CD4-positive, alpha-beta T cell (primary cell): ENCODE measurements at regions of chr16 and their contacts with region 1.

Region 1: GRCh38 chr16:67641779-67642708 is 2.9 kb upstream of the CARMIL2 start:
- DNase-seq: no peak
- ATAC-seq: no peak
- H3K4me3 ChIP-seq: no peak overlapping the region
- H3K4me3 Mint-ChIP-seq: no peak overlapping the region
- H3K27ac ChIP-seq: no peak overlapping the region
- H3K27ac Mint-ChIP-seq: no peak overlapping the region
- H3K4me1 ChIP-seq: peaks cover 31% of the 10 kb centered on the region
- H3K4me1 Mint-ChIP-seq: no peaks in the 10 kb centered on the region
- H3K27me3 ChIP-seq: no peaks in the 10 kb centered on the region
- H3K27me3 Mint-ChIP-seq: no peaks in the 10 kb centered on the region
- CTCF ChIP-seq: no peak

Region 2: DNA sequence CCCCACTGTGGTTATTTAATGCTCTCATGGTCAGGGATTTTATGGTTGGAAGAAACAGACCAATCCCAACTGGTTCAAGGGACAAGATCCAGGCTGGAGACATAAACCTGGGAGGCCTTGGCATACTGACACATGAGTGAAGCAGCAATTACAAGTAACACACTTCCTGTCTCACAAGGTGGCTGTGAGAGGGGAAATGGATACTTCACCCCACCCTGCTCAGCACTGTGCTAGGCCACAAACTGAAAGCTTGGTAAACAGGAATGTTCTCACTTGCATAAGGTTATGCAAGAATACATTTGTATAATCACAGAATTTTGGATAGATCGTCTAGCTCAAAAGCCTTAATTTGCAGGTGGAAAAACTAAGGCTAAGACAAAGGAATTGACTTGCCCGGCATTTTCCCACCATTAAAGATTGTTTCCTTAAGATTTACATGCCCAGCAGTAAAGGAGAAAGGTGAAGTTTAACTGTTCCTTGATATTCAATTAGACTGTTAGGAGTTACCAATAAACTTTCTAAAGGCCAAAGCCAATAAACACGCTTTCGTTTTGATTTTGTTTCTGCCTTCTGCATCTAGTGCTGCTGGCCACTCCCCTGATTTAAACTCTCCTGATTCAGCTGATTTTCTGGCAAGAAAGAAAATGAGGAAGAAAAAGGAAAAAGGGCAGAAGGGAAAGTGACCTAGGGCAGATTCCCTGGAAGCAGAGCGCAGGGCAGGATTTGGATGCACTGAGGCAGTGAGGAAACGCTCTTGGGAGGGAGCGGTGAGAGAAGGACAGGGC is 1491.2 kb before region 1 on chr16:
- CTCF ChIA-PET with region 1: no interaction called
- POLR2A ChIA-PET with region 1: no interaction called
- intact Hi-C with region 1: no loop called
- DNase-seq: peak in 2 of 14 experiments; percentile 11 to 53
- ATAC-seq: no peak
- H3K4me3 ChIP-seq: no peak overlapping the region
- H3K4me3 Mint-ChIP-seq: no peak overlapping the region
- H3K27ac ChIP-seq: no peak overlapping the region
- H3K27ac Mint-ChIP-seq: no peak overlapping the region
- H3K4me1 ChIP-seq: peaks cover 10% of the 10 kb centered on the region
- H3K4me1 Mint-ChIP-seq: peaks cover 6% of the 10 kb centered on the region
- H3K27me3 ChIP-seq: no peaks in the 10 kb centered on the region
- H3K27me3 Mint-ChIP-seq: peaks cover 13% of the 10 kb centered on the region
- CTCF ChIP-seq: no peak

Region 3: GRCh38 chr16:67216612-67217490 is 425.2 kb before region 1 on chr16:
- CTCF ChIA-PET with region 1: no interaction called
- POLR2A ChIA-PET with region 1: no interaction called
- intact Hi-C with region 1: no loop called
- DNase-seq: no peak
- ATAC-seq: no peak
- H3K4me3 ChIP-seq: no peak overlapping the region
- H3K4me3 Mint-ChIP-seq: no peak overlapping the region
- H3K27ac ChIP-seq: no peak overlapping the region
- H3K27ac Mint-ChIP-seq: no peak overlapping the region
- H3K4me1 ChIP-seq: no peaks in the 10 kb centered on the region
- H3K4me1 Mint-ChIP-seq: no peaks in the 10 kb centered on the region
- H3K27me3 ChIP-seq: no peaks in the 10 kb centered on the region
- H3K27me3 Mint-ChIP-seq: no peaks in the 10 kb centered on the region
- CTCF ChIP-seq: no peak

Region 4: GRCh38 chr16:67537270-67537635 is 104.8 kb before region 1 on chr16:
- CTCF ChIA-PET with region 1: interaction called, 5 read pairs
- POLR2A ChIA-PET with region 1: interaction called, 11 read pairs
- intact Hi-C with region 1: no loop called
- DNase-seq: peak in 10 of 14 experiments; percentile 27 to 77 (median 57)
- ATAC-seq: peak; percentile 52
- H3K4me3 ChIP-seq: peak overlapping the region; percentile 84
- H3K4me3 Mint-ChIP-seq: peak overlapping the region; percentile 86
- H3K27ac ChIP-seq: peak overlapping the region; percentile 69 to 73
- H3K27ac Mint-ChIP-seq: peak overlapping the region; percentile 66
- H3K4me1 ChIP-seq: peaks cover 37% of the 10 kb centered on the region
- H3K4me1 Mint-ChIP-seq: peaks cover 49% of the 10 kb centered on the region
- H3K27me3 ChIP-seq: no peaks in the 10 kb centered on the region
- H3K27me3 Mint-ChIP-seq: no peaks in the 10 kb centered on the region
- CTCF ChIP-seq: no peak

Region 5: GRCh38 chr16:67546761-67547422 is 95.2 kb before region 1 on chr16:
- CTCF ChIA-PET with region 1: interaction called, 49 read pairs
- POLR2A ChIA-PET with region 1: interaction called, 90 read pairs
- intact Hi-C with region 1: loop called (anchors 1 kb)
- DNase-seq: peak; percentile 61 to 88 (median 72)
- ATAC-seq: peak; percentile 22
- H3K4me3 ChIP-seq: peak overlapping the region; percentile 44
- H3K4me3 Mint-ChIP-seq: peak overlapping the region; percentile 72
- H3K27ac ChIP-seq: peak overlapping the region; percentile 72 to 76
- H3K27ac Mint-ChIP-seq: peak overlapping the region; percentile 92
- H3K4me1 ChIP-seq: peaks cover 51% of the 10 kb centered on the region
- H3K4me1 Mint-ChIP-seq: peaks cover 50% of the 10 kb centered on the region
- H3K27me3 ChIP-seq: no peaks in the 10 kb centered on the region
- H3K27me3 Mint-ChIP-seq: no peaks in the 10 kb centered on the region
- CTCF ChIP-seq: peak; percentile 99

Region 6: GRCh38 chr16:67555795-67556212 is 86.2 kb before region 1 on chr16:
- CTCF ChIA-PET with region 1: interaction called, 8 read pairs
- POLR2A ChIA-PET with region 1: interaction called, 90 read pairs
- intact Hi-C with region 1: no loop called
- DNase-seq: peak in 4 of 14 experiments; percentile 40 to 80 (median 71)
- ATAC-seq: peak; percentile 95
- H3K4me3 ChIP-seq: no peak overlapping the region
- H3K4me3 Mint-ChIP-seq: peak overlapping the region; percentile 80
- H3K27ac ChIP-seq: peak overlapping the region; percentile 71 to 77
- H3K27ac Mint-ChIP-seq: peak overlapping the region; percentile 91
- H3K4me1 ChIP-seq: peaks cover 54% of the 10 kb centered on the region
- H3K4me1 Mint-ChIP-seq: peaks cover 52% of the 10 kb centered on the region
- H3K27me3 ChIP-seq: no peaks in the 10 kb centered on the region
- H3K27me3 Mint-ChIP-seq: no peaks in the 10 kb centered on the region
- CTCF ChIP-seq: no peak

Region 7: DNA sequence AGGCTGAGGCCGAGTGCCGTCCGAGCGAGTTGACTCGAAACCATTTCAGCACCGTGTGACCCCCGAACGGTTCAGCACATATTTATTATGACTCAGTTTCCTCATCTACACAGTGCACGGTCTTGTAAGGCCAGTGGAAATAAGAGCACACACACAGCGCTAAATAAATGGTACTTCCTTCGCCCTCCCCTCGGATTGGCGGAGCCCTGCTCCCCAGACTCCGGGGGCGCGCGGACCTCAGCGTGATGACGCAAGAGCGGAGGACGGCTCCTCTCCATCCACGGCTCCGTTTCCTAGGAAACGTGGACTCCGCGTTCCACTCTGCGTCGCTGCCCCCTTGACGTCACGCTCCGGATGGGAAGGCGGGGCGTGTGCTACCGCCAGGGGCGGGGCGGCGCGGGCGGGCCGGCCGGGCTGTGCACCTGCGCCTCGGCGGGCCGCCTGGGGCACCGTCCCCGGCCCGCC is 18.6 kb after region 1 on chr16 and contains the start of gene PARD6A:
- CTCF ChIA-PET with region 1: interaction called, 8 read pairs
- POLR2A ChIA-PET with region 1: interaction called, 74 read pairs
- intact Hi-C with region 1: no loop called
- DNase-seq: peak; percentile 86 to 99 (median 93)
- ATAC-seq: peak; percentile 76
- H3K4me3 ChIP-seq: peak within 1 kb of the TSS; percentile 95
- H3K4me3 Mint-ChIP-seq: peak within 1 kb of the TSS; percentile 95
- H3K27ac ChIP-seq: peak within 1 kb of the TSS; percentile 93 to 99
- H3K27ac Mint-ChIP-seq: peak within 1 kb of the TSS; percentile 94
- H3K4me1 ChIP-seq: peaks cover 38% of the 10 kb centered on the region
- H3K4me1 Mint-ChIP-seq: peaks cover 37% of the 10 kb centered on the region
- H3K27me3 ChIP-seq: no peaks in the 10 kb centered on the region
- H3K27me3 Mint-ChIP-seq: no peaks in the 10 kb centered on the region
- CTCF ChIP-seq: no peak
- total RNA-seq, gene PARD6A: 4.5 to 4.7 TPM

Region 8: DNA sequence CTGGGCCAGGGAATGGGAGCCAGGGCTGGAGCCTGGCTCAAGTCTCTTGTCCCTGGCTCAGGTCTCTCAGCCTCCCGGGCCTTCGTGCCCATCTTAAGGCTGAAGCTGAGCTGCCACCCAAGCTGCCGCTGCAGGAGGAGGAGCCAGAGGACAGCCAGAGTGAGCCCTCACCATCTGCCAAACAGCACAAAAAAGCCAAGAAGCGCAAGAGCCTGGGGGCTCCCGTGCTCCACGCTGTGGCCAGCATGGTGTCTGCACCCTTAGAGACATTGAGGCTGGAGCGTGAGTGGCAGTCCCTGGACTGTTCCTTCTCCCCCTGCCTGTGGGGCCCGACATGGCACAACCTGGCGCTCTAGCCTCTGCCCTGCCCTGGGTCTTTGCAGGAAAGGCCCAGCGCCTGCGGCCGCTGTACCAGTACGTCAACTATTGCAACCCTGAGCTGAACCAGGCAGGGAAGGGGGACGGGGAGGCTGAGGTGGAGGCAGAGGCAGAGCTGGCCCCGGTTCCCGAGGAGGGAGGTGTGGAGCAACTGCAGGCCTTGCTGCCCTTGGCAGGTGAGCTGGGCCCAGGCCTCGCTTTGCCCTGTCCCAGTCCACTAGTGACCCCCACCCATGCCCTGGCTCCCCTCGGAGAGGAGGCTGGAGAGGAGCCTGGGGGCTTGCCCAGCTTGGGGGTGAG is 25.9 kb after region 1 on chr16:
- CTCF ChIA-PET with region 1: interaction called, 10 read pairs
- POLR2A ChIA-PET with region 1: interaction called, 18 read pairs
- intact Hi-C with region 1: loop called in 1 of 2 experiments (anchors 1 kb)
- DNase-seq: peak; percentile 71 to 94 (median 81)
- ATAC-seq: peak; percentile 91
- H3K4me3 ChIP-seq: peak overlapping the region; percentile 65
- H3K4me3 Mint-ChIP-seq: peak overlapping the region; percentile 90
- H3K27ac ChIP-seq: peak overlapping the region; percentile 28 to 44
- H3K27ac Mint-ChIP-seq: peak overlapping the region; percentile 55
- H3K4me1 ChIP-seq: peaks cover 36% of the 10 kb centered on the region
- H3K4me1 Mint-ChIP-seq: peaks cover 28% of the 10 kb centered on the region
- H3K27me3 ChIP-seq: no peaks in the 10 kb centered on the region
- H3K27me3 Mint-ChIP-seq: no peaks in the 10 kb centered on the region
- CTCF ChIP-seq: peak; percentile 74

Region 9: DNA sequence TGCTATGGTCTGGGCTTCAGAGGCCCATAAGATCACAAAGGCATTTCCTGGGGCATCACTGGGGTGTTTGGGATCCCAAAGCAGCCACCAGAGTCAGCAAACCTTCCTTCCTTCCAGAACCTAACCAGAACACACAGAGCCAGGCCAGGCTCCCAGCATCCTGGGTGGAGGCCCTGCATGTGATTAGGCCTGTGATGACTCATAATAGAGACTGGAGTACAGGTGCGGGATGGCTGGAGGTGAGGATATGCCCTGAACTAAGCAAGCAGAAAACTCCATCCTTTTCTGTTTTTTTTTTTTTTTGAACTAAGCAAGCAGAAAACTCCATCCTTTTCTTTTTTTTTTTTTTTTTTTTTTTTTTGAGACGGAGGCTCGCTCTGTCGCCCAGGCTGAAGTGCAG is 94.8 kb after region 1 on chr16:
- CTCF ChIA-PET with region 1: no interaction called
- POLR2A ChIA-PET with region 1: no interaction called
- intact Hi-C with region 1: no loop called
- DNase-seq: no peak
- ATAC-seq: no peak
- H3K4me3 ChIP-seq: no peak overlapping the region
- H3K4me3 Mint-ChIP-seq: no peak overlapping the region
- H3K27ac ChIP-seq: no peak overlapping the region
- H3K27ac Mint-ChIP-seq: peak overlapping the region; percentile 27
- H3K4me1 ChIP-seq: no peaks in the 10 kb centered on the region
- H3K4me1 Mint-ChIP-seq: no peaks in the 10 kb centered on the region
- H3K27me3 ChIP-seq: no peaks in the 10 kb centered on the region
- H3K27me3 Mint-ChIP-seq: no peaks in the 10 kb centered on the region
- CTCF ChIP-seq: no peak